HepG2 (cell line): ENCODE measurements at regions of chr12 and their contacts with region 1.

Region 1: DNA sequence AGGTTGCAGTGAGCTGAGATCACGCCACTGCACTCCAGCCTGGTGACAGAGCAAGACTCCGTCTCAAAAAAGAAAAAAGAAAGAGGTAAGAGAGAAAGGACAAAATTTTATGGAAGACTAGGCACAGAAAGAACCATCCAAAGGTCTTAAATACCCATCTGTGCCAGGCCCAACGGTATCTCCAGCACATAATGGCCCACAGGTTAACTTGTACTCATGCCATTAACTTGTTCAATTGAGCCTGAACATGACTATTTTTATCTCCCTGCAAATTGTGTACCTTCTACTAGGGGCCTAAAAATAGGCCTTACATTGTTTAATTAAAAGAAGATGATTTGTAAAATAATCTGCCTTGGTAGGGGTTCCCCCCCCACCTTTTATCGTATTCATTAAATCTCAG is 80.2 kb downstream of the RIC8B start:
- DNase-seq: no peak
- ATAC-seq: peak; percentile 31
- H3K4me3 ChIP-seq: peak overlapping the region in 2 of 3 experiments; percentile 21 to 31; a peak in 1 of 6 replicates
- H3K27ac ChIP-seq: peak overlapping the region; percentile 89
- H3K4me1 ChIP-seq: peaks cover 55% of the 10 kb centered on the region
- H3K27me3 ChIP-seq: no peaks in the 10 kb centered on the region
- CTCF ChIP-seq: no peak
- EP300 ChIP-seq: no peak
- POLR2A ChIP-seq: no peak
- RAD21 ChIP-seq: no peak

Region 2: GRCh38 chr12:106780010-106780631 is 74.6 kb before region 1 on chr12:
- CTCF ChIA-PET with region 1: no interaction called
- POLR2A ChIA-PET with region 1: no interaction called
- in situ Hi-C with region 1: no loop called
- intact Hi-C with region 1: no loop called
- DNase-seq: no peak
- ATAC-seq: no peak
- H3K4me3 ChIP-seq: no peak overlapping the region
- H3K27ac ChIP-seq: no peak overlapping the region
- H3K4me1 ChIP-seq: peaks cover 39% of the 10 kb centered on the region
- H3K27me3 ChIP-seq: no peaks in the 10 kb centered on the region
- CTCF ChIP-seq: no peak
- EP300 ChIP-seq: no peak
- POLR2A ChIP-seq: no peak
- RAD21 ChIP-seq: no peak

Region 3: GRCh38 chr12:106819991-106820390 is 34.7 kb before region 1 on chr12:
- CTCF ChIA-PET with region 1: no interaction called
- POLR2A ChIA-PET with region 1: no interaction called
- in situ Hi-C with region 1: no loop called
- intact Hi-C with region 1: loop called (anchors 1 kb)
- DNase-seq: no peak
- ATAC-seq: no peak
- H3K4me3 ChIP-seq: no peak overlapping the region
- H3K27ac ChIP-seq: no peak overlapping the region
- H3K4me1 ChIP-seq: no peaks in the 10 kb centered on the region
- H3K27me3 ChIP-seq: no peaks in the 10 kb centered on the region
- CTCF ChIP-seq: no peak
- EP300 ChIP-seq: no peak
- POLR2A ChIP-seq: no peak
- RAD21 ChIP-seq: no peak

Region 4: DNA sequence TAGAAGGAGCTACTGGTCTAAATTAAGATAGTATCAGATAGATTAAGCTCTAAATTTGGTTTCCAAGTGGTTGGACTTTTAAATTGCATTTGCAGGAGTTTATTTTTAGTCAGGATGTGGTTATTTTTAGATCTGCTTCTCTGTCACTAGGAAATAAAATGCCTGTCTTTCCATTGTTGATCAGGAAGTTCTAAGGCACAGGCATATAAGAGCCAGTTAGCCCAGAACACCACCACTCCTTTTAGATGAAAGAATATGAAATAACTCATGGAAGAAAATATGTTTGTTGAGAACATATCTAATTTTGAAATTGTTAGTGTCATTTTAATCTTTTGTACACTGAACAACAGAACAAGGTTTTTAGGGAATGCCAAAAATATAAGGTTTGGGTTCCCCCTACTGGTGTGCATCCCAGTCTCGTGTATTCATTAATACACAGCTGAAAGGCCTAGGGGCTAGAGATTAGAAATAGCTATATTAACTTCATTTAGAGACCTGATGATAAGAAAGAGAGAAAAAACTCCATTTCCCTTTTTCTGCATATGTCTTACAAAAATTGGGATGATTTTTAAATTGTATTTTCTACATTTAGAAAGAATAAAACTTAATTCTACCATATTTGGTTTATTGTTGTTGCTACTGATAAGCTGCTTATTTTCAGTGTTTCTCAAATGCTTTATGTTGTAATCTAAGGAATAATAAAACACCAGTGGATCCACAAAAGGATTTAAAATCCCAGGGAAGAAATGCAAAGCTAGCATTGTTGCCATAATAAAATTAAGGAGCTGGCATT is 13.0 kb before region 1 on chr12:
- CTCF ChIA-PET with region 1: no interaction called
- POLR2A ChIA-PET with region 1: no interaction called
- in situ Hi-C with region 1: no loop called
- intact Hi-C with region 1: no loop called
- DNase-seq: peak; percentile 30
- ATAC-seq: peak; percentile 71
- H3K4me3 ChIP-seq: no peak overlapping the region
- H3K27ac ChIP-seq: peak overlapping the region; percentile 9
- H3K4me1 ChIP-seq: peaks cover 26% of the 10 kb centered on the region
- H3K27me3 ChIP-seq: no peaks in the 10 kb centered on the region
- CTCF ChIP-seq: peak; percentile 68
- EP300 ChIP-seq: no peak
- POLR2A ChIP-seq: no peak
- RAD21 ChIP-seq: peak; percentile 36; the same call in 1 of the 2 replicates

Region 5: DNA sequence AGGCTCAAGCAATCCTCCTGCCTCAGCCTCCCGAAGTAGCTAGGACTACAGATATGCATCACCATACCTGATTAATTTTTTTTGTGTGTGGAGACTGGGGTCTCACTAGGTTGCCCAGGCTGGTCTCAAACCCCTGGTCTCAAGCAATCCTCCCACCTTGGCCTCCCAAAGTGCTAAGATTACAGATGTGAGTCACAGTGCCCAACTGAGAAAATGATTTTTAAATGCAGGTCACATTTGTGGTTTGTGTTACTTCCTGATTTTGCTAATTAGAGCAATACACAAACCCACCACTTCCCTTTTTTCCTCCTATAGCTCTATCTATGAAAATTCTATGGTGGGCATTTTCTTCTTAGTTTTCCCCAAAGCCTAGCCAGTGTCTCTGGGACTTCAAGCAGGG is 55.5 kb after region 1 on chr12:
- CTCF ChIA-PET with region 1: no interaction called
- POLR2A ChIA-PET with region 1: no interaction called
- in situ Hi-C with region 1: no loop called
- intact Hi-C with region 1: no loop called
- DNase-seq: no peak
- ATAC-seq: no peak
- H3K4me3 ChIP-seq: no peak overlapping the region
- H3K27ac ChIP-seq: no peak overlapping the region
- H3K4me1 ChIP-seq: peaks cover 26% of the 10 kb centered on the region
- H3K27me3 ChIP-seq: peaks cover 1 to 6% of the 10 kb centered on the region in 2 experiments; a peak in 2 of 5 replicates
- CTCF ChIP-seq: no peak
- EP300 ChIP-seq: no peak
- POLR2A ChIP-seq: no peak
- RAD21 ChIP-seq: no peak